Heart left ventricle (tissue), 16 donors: ENCODE measurements at regions of chr4 and their contacts with region 1.

Region 1: GRCh38 chr4:47704693-47705325 is 133.1 kb downstream of the CORIN start:
- DNase-seq: peak; percentile 13 to 67 (median 60)
- ATAC-seq: peak; percentile 89 to 97 (median 94)
- H3K4me3 ChIP-seq: peak overlapping the region; percentile 7 to 49 (median 29)
- H3K27ac ChIP-seq: peak overlapping the region in 7 of 12 donors; percentile 13 to 71 (median 35)
- H3K4me1 ChIP-seq: peaks cover 0 to 25% (median 2%) of the 10 kb centered on the region in 12 donors
- H3K27me3 ChIP-seq: peaks cover 0 to 3% (median 0%) of the 10 kb centered on the region in 9 donors
- CTCF ChIP-seq: peak in 10 of 12 donors; percentile 28 to 61 (median 48)
- POLR2A ChIP-seq: no peak

Region 2: DNA sequence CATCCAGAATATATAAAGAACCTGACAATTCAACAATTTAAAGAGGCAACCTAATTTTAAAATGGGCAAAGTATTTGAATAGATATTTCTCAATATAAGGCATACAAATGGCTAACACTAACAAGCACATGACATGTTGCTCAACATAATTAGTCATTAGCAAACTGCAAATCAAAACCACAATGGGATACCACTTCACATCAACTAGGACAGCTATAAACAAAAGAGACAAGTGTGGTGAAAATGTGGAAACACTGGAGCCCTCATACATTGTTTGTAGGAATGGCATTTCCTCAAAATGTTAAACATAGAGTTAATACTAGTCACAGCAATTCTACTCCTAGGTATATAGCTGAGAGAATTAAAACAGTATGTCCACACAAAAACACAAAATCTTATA is 36.4 kb after region 1 on chr4:
- intact Hi-C with region 1: loop called in 1 of 10 experiments (anchors 5 kb)
- DNase-seq: no peak
- ATAC-seq: no peak
- H3K4me3 ChIP-seq: no peak overlapping the region
- H3K27ac ChIP-seq: no peak overlapping the region
- H3K4me1 ChIP-seq: peaks cover 0 to 35% (median under 1%) of the 10 kb centered on the region in 12 donors
- H3K27me3 ChIP-seq: no peaks in the 10 kb centered on the region
- CTCF ChIP-seq: no peak
- POLR2A ChIP-seq: no peak

Region 3: GRCh38 chr4:47752214-47752613 is 47.4 kb after region 1 on chr4:
- intact Hi-C with region 1: loop called in 1 of 10 experiments (anchors 5 kb)
- DNase-seq: no peak
- ATAC-seq: peak in 2 of 4 donors; percentile 54 to 56
- H3K4me3 ChIP-seq: no peak overlapping the region
- H3K27ac ChIP-seq: peak overlapping the region in 9 of 12 donors; percentile 2 to 77 (median 60)
- H3K4me1 ChIP-seq: peaks cover 0 to 35% (median 2%) of the 10 kb centered on the region in 12 donors
- H3K27me3 ChIP-seq: no peaks in the 10 kb centered on the region
- CTCF ChIP-seq: no peak
- POLR2A ChIP-seq: no peak

Region 4: DNA sequence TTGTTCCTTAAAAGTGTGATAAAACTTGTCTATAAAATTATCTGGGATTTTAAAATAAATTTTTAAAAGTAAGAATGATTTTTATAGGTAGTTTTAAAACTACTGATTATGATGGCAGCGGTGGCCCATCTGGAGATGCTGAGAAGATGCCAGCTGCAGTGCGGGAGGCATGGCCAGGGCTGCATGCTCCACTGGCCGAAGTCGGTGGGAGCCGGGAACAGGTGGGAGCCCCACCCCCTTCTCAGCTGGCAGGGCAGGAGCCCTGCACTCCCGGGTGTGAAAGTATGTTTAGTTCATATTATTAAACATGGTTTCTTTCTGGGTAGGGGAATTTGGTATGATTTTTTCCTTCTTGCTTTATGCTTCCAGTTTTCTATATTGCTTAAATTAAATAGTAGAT is 69.3 kb after region 1 on chr4:
- intact Hi-C with region 1: loop called in 1 of 10 experiments (anchors 10 kb)
- DNase-seq: no peak
- ATAC-seq: no peak
- H3K4me3 ChIP-seq: no peak overlapping the region
- H3K27ac ChIP-seq: no peak overlapping the region
- H3K4me1 ChIP-seq: peaks cover 0 to 7% (median 0%) of the 10 kb centered on the region in 12 donors
- H3K27me3 ChIP-seq: no peaks in the 10 kb centered on the region
- CTCF ChIP-seq: no peak
- POLR2A ChIP-seq: no peak

Region 5: DNA sequence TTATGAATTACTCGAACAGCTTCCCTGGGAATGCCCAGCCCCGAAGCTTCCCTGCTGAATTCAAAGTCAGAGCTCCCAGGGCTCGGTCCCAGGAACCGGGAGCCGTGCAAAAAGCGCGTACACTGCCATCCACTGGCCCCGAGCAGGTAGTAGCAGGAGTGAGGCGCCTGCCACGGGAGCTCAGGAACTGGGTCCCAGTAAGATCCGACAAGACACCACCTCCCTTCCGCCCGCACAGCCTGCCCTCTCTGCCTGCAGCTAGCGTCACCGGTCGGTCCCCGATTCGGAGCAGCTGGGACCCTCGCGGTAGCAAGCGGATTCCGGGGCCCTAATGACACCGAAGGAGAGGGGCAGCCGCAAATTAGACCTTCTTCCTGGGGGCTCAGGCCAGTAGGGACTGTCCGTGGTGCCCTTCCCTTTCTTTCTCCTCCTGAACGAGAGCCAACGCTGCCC is 131.9 kb after region 1 on chr4:
- intact Hi-C with region 1: loop called (anchors 1 to 10 kb)
- DNase-seq: peak; percentile 77 to 92 (median 85)
- ATAC-seq: peak; percentile 91 to 96 (median 96)
- H3K4me3 ChIP-seq: peak overlapping the region; percentile 41 to 81 (median 60)
- H3K27ac ChIP-seq: peak overlapping the region in 10 of 12 donors; percentile 49 to 87 (median 74)
- H3K4me1 ChIP-seq: peaks cover 0 to 39% (median 18%) of the 10 kb centered on the region in 12 donors
- H3K27me3 ChIP-seq: peaks cover 0 to 14% (median 0%) of the 10 kb centered on the region in 9 donors
- CTCF ChIP-seq: peak; percentile 49 to 79 (median 70)
- POLR2A ChIP-seq: peak in 1 of 2 donors; percentile 31

Region 6: DNA sequence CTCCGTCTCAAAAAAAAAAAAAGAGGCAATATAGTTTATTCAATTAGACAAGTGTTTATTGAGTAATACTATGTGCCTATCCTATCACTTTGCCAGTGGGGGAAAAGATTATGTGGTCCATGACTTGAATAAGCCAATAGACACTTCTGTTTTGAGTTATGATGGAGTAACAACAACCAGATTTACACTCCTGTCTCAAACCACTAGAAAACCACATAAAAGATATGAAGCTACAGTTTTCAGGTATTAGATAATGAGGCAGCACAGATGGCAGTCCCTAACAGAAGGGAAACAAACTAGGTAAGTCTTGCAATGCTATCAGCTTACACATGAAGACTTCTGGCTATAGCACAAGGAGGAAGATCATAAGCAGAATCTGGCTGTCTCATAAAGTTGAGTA is 187.1 kb after region 1 on chr4:
- intact Hi-C with region 1: no loop called
- DNase-seq: no peak
- ATAC-seq: no peak
- H3K4me3 ChIP-seq: no peak overlapping the region
- H3K27ac ChIP-seq: no peak overlapping the region
- H3K4me1 ChIP-seq: no peaks in the 10 kb centered on the region
- H3K27me3 ChIP-seq: no peaks in the 10 kb centered on the region
- CTCF ChIP-seq: no peak
- POLR2A ChIP-seq: no peak

Region 7: GRCh38 chr4:47914220-47914925 is 209.6 kb after region 1 on chr4 and contains the start of gene NFXL1:
- intact Hi-C with region 1: loop called in 1 of 10 experiments (anchors 10 kb)
- DNase-seq: peak; percentile 97 to 99 (median 99)
- ATAC-seq: peak; percentile 99 to 100 (median 100)
- H3K4me3 ChIP-seq: peak within 1 kb of the TSS; percentile 43 to 96 (median 88)
- H3K27ac ChIP-seq: peak within 1 kb of the TSS in 11 of 12 donors; percentile 46 to 85 (median 81)
- H3K4me1 ChIP-seq: peaks cover 0 to 26% (median 12%) of the 10 kb centered on the region in 12 donors
- H3K27me3 ChIP-seq: no peaks in the 10 kb centered on the region
- CTCF ChIP-seq: no peak
- POLR2A ChIP-seq: peak in 1 of 2 donors; percentile 87
- total RNA-seq, gene NFXL1: 4.0 to 7.3 (median 5.4) TPM